Naive thymus-derived CD4-positive, alpha-beta T cell (primary cell): ENCODE measurements at regions of chr16 and their contacts with region 1.

Region 1: DNA sequence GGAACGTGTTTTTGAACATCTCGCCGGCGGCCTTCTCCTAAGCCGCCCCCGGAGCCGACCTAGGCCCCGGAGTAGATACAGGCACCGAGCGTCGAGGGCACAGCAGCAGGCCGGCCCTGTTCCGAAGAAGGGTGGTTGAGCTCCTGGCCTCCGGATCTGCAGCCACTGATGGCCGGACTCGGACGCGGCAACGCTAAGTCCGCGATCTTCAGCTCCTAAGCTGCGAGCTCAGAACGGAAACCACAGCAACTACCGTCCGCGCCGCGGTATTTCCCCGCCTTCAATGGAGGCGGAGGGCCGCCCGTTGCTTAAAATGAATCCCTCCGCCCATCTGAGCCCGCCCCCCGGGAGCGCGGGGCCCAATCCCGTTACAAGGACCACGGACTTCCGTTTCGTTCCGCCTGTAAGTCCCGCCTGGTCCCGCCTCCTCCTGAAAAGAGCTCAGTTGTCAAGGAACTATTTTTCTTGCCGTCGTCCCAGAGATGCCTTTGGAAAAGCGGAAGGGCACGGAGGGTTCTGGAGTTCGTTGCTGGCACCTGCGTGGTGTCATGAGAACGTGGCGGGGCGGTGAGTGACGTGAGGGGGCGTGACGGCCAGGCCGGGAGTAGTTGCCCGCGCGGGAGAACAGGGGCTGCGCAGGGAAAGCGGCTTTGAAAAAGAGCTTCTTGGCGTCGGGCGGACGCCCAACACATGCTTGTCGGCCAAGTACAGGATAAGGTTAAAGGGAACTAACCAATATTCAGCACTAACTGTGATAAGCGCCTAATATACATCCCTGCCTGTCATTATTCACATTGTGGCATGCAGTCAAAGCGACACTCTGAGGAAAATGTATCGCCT is at the start of gene CFAP20:
- DNase-seq: peak; percentile 87 to 99 (median 97)
- ATAC-seq: peak; percentile 94
- H3K4me3 ChIP-seq: peak within 1 kb of the TSS; percentile 99
- H3K4me3 Mint-ChIP-seq: peak within 1 kb of the TSS; percentile 89 to 96 (median 92)
- H3K27ac ChIP-seq: peak within 1 kb of the TSS; percentile 90
- H3K27ac Mint-ChIP-seq: peak within 1 kb of the TSS; percentile 80 to 98 (median 94)
- H3K4me1 ChIP-seq: peaks cover 17 to 29% of the 10 kb centered on the region in 2 donors
- H3K4me1 Mint-ChIP-seq: peaks cover 30 to 47% (median 45%) of the 10 kb centered on the region in 7 donors
- H3K27me3 ChIP-seq: no peaks in the 10 kb centered on the region
- H3K27me3 Mint-ChIP-seq: no peaks in the 10 kb centered on the region
- total RNA-seq, gene CFAP20: 28.2 to 165 (median 40.7) TPM

Region 2: DNA sequence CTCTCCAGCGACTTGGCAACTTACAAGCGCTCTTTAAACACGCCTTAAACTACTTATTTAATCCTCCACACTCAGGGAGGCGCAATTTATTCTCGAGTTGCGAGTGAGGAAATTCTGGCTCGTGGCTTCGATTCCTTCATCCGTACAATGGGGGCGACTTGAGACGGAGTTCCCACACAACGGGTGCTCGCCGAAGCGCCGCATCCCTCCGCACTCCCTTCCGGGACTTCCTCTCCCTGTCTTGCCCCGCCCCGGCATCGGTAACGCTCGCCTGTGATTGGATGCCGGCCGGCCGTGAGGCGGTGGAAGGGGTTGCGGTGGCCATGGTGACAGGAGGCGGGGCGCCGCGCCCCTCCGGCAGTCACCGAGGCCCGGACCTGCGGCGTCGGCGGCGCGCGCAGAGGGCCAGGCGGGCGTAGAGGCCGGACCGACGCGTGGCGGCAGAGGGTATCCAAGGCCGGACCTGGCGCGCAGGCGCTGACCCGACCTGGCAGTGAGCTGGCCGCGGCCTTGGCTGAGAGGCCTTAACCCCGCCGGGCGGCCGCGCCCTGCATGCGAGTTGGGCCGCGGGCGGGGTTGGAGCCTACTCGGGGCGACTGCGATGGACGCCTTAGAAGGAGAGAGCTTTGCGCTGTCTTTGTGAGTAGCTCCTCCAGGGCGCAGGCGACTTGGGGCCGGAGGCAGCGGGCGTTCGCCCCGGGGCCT is 884.4 kb before region 1 on chr16 and contains the start of gene ARL2BP:
- CTCF ChIA-PET with region 1: no interaction called
- POLR2A ChIA-PET with region 1: no interaction called
- intact Hi-C with region 1: loop called in 1 of 2 experiments (anchors 2 kb)
- DNase-seq: peak; percentile 90 to 98 (median 96)
- ATAC-seq: peak; percentile 97
- H3K4me3 ChIP-seq: peak within 1 kb of the TSS; percentile 44
- H3K4me3 Mint-ChIP-seq: peak within 1 kb of the TSS; percentile 81 to 97 (median 89)
- H3K27ac ChIP-seq: peak within 1 kb of the TSS; percentile 84
- H3K27ac Mint-ChIP-seq: peak within 1 kb of the TSS; percentile 88 to 97 (median 93)
- H3K4me1 ChIP-seq: peaks cover 5 to 6% of the 10 kb centered on the region in 2 donors
- H3K4me1 Mint-ChIP-seq: peaks cover 14 to 25% (median 17%) of the 10 kb centered on the region in 7 donors
- H3K27me3 ChIP-seq: no peaks in the 10 kb centered on the region
- H3K27me3 Mint-ChIP-seq: no peaks in the 10 kb centered on the region
- total RNA-seq, gene ARL2BP: 32.6 to 57.7 (median 37.9) TPM

Region 3: DNA sequence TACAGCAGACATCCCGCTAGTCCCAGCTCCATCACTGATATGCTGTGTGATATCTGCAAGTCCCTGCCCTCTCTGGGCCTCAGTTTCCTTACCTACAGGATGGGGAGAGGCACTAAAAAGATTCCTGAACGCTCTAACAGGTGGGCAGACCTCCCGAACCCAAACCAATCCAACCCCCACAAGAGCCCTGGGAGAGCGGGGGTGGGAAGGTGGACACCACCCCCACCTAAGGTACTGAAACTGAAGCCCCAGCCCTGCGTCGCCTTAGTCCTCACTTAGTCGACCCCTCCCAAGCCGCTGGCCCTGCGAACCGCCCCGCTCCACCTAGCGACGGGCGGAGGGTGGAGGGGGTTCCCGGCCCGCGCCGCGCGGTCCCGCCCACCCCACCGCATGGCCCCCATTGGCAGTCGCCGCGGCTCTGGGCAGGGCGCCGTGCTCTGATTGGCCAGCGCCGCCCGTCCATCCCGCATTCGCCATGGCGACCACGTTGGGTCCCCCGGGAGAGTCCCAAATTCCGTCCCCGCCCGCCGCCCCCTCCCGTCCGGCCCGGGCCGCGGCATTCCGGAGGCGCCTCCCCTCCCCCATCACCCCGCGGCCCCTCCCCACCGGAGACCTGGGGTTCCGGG is 593.5 kb before region 1 on chr16:
- CTCF ChIA-PET with region 1: no interaction called
- POLR2A ChIA-PET with region 1: no interaction called
- intact Hi-C with region 1: loop called in 1 of 2 experiments (anchors 1 kb)
- DNase-seq: peak; percentile 77 to 94 (median 87)
- ATAC-seq: peak; percentile 95
- H3K4me3 ChIP-seq: peak overlapping the region; percentile 44
- H3K4me3 Mint-ChIP-seq: peak overlapping the region; percentile 77 to 89 (median 82)
- H3K27ac ChIP-seq: peak overlapping the region; percentile 93
- H3K27ac Mint-ChIP-seq: peak overlapping the region; percentile 82 to 96 (median 94)
- H3K4me1 ChIP-seq: peaks cover 54 to 60% of the 10 kb centered on the region in 2 donors
- H3K4me1 Mint-ChIP-seq: peaks cover 57 to 79% (median 74%) of the 10 kb centered on the region in 7 donors
- H3K27me3 ChIP-seq: no peaks in the 10 kb centered on the region
- H3K27me3 Mint-ChIP-seq: no peaks in the 10 kb centered on the region

Region 4: GRCh38 chr16:57984331-57985203 is 144.8 kb before region 1 on chr16:
- CTCF ChIA-PET with region 1: no interaction called
- POLR2A ChIA-PET with region 1: no interaction called
- intact Hi-C with region 1: loop called in 1 of 2 experiments (anchors 1 kb)
- DNase-seq: peak; percentile 75 to 93 (median 90)
- ATAC-seq: peak; percentile 99
- H3K4me3 ChIP-seq: peak overlapping the region; percentile 63
- H3K4me3 Mint-ChIP-seq: peak overlapping the region; percentile 84 to 94 (median 91)
- H3K27ac ChIP-seq: peak overlapping the region; percentile 64
- H3K27ac Mint-ChIP-seq: peak overlapping the region; percentile 37 to 93 (median 72)
- H3K4me1 ChIP-seq: peaks cover 6% of the 10 kb centered on the region in 2 donors
- H3K4me1 Mint-ChIP-seq: peaks cover 2 to 21% (median 8%) of the 10 kb centered on the region in 7 donors
- H3K27me3 ChIP-seq: no peaks in the 10 kb centered on the region
- H3K27me3 Mint-ChIP-seq: peaks cover 0 to 21% (median 0%) of the 10 kb centered on the region in 5 donors

Region 5: DNA sequence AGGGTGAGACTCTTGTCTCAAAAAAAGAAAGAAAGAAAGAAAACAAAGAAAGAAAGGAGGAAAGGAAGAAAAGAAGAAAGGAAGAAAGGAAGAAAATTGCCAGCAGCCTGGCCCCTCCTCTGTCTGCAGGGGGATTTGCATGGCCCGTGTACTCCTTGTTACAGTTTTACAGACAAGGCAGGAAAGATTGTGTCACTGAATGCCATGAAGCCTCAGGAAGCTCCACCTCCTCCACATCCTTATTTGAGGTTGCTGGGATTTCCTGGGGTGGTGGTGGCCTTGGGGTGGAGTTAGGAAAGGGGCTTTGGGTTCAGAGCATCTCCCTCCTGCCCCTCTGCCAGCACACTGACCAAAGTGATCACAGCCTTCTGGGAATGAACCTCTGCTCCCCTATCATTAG is 23.7 kb before region 1 on chr16:
- CTCF ChIA-PET with region 1: no interaction called
- POLR2A ChIA-PET with region 1: no interaction called
- intact Hi-C with region 1: no loop called
- DNase-seq: no peak
- ATAC-seq: no peak
- H3K4me3 ChIP-seq: no peak overlapping the region
- H3K4me3 Mint-ChIP-seq: no peak overlapping the region
- H3K27ac ChIP-seq: no peak overlapping the region
- H3K27ac Mint-ChIP-seq: no peak overlapping the region
- H3K4me1 ChIP-seq: no peaks in the 10 kb centered on the region
- H3K4me1 Mint-ChIP-seq: peaks cover 0 to 10% (median 2%) of the 10 kb centered on the region in 7 donors
- H3K27me3 ChIP-seq: no peaks in the 10 kb centered on the region
- H3K27me3 Mint-ChIP-seq: peaks cover 0 to 2% (median 0%) of the 10 kb centered on the region in 5 donors

Region 6: DNA sequence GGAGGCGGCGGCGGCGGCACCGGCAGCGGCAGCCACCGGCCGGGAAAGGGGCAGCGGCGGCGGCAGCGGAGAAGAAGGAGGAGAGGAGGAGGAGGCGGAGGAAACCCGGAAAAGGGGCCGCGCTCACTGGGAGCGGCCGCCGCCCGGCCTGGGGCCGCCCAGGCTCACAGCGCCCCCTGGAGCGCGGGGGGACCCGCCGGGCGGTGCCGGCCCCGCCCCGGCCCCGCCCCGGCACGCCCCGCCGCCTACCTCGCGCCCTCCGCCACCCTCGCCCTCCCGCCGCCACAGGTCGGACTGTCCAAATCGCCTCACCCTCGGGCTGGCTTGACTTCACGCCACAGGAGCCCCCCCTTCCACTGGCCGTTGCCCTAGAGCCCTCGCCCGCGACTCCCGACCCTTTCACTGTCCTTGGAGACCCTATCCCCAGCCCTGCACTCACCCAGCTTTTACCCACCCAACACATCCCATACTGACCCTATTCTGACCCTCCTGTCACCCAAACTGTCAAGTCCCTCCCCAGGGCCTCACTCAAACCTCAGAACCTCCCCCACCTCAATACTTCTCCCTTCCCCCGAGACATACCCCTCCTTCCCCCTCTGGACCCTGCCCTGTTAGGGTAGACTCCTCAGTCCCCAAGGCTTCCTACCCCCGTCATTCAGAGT is 68.8 kb after region 1 on chr16 and contains the start of gene CSNK2A2:
- CTCF ChIA-PET with region 1: interaction called, 4 read pairs
- POLR2A ChIA-PET with region 1: interaction called, 5 read pairs
- intact Hi-C with region 1: loop called (anchors 1 kb)
- DNase-seq: peak; percentile 38 to 81 (median 60)
- ATAC-seq: peak; percentile 99
- H3K4me3 ChIP-seq: peak within 1 kb of the TSS; percentile 63
- H3K4me3 Mint-ChIP-seq: peak within 1 kb of the TSS; percentile 84 to 93 (median 88)
- H3K27ac ChIP-seq: peak within 1 kb of the TSS; percentile 62
- H3K27ac Mint-ChIP-seq: peak within 1 kb of the TSS; percentile 61 to 90 (median 82)
- H3K4me1 ChIP-seq: peaks cover 21 to 22% of the 10 kb centered on the region in 2 donors
- H3K4me1 Mint-ChIP-seq: peaks cover 30 to 51% (median 46%) of the 10 kb centered on the region in 7 donors
- H3K27me3 ChIP-seq: no peaks in the 10 kb centered on the region
- H3K27me3 Mint-ChIP-seq: peaks cover 9 to 33% (median 13%) of the 10 kb centered on the region in 5 donors
- total RNA-seq, gene CSNK2A2: 46.5 to 70.0 (median 67.9) TPM

Region 7: DNA sequence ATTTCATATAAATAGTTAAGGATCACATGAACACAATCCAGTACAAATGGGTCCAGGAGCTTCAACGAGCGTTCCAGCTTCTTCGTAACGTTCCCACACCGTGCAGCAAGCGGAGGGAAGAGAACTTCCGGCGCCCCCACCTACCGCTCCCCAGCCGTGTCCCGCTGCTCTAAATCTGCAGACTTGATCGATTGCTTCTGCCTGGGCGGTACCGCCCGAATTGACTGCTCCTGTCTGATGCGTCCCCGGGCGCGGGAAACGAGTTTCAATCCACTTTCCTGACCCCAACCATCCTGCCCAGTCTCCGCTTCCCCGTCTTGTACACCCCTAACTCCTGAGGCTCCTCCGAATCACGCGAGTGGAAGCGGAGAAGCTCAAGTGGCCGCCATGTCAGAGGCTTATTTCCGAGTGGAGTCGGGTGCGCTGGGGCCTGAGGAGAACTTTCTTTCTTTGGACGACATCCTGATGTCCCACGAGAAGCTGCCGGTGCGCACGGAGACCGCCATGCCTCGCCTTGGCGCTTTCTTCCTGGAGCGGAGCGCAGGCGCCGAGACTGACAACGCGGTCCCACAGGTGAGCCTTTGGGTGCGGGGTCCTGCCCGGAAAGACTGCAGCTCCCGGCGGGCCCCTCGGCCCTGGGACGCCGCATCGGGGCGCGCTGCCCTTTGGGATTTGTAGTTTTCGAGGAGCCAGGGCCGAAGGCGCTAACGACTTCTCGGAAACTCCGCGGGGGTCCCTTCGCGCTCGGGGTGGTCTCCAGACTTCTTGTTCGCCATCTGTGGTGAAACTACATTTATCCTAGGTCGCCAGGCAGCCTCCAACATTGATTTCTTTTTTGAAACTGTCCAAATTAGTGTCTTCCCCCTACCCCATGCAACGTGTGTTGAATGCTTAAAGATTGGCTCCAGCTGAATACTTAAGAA is 263.2 kb after region 1 on chr16 and contains the start of gene GINS3:
- CTCF ChIA-PET with region 1: no interaction called
- POLR2A ChIA-PET with region 1: no interaction called
- intact Hi-C with region 1: loop called (anchors 1 kb)
- DNase-seq: peak; percentile 67 to 83 (median 81)
- ATAC-seq: peak; percentile 96
- H3K4me3 ChIP-seq: peak within 1 kb of the TSS; percentile 99
- H3K4me3 Mint-ChIP-seq: peak within 1 kb of the TSS; percentile 91 to 100 (median 98)
- H3K27ac ChIP-seq: peak within 1 kb of the TSS; percentile 80
- H3K27ac Mint-ChIP-seq: peak within 1 kb of the TSS; percentile 89 to 99 (median 95)
- H3K4me1 ChIP-seq: peaks cover 5 to 6% of the 10 kb centered on the region in 2 donors
- H3K4me1 Mint-ChIP-seq: peaks cover 3 to 28% (median 16%) of the 10 kb centered on the region in 7 donors
- H3K27me3 ChIP-seq: no peaks in the 10 kb centered on the region
- H3K27me3 Mint-ChIP-seq: peaks cover 0 to 21% (median 0%) of the 10 kb centered on the region in 5 donors
- total RNA-seq, gene GINS3: 0.66 to 13.3 (median 1.4) TPM

Region 8: GRCh38 chr16:58629572-58630104 is 500.3 kb after region 1 on chr16 and contains the start of gene CNOT1:
- CTCF ChIA-PET with region 1: no interaction called
- POLR2A ChIA-PET with region 1: no interaction called
- intact Hi-C with region 1: loop called (anchors 1 to 2 kb)
- DNase-seq: peak; percentile 92 to 100 (median 99)
- ATAC-seq: peak; percentile 91
- H3K4me3 ChIP-seq: peak within 1 kb of the TSS; percentile 84
- H3K4me3 Mint-ChIP-seq: peak within 1 kb of the TSS; percentile 94 to 100 (median 98)
- H3K27ac ChIP-seq: peak within 1 kb of the TSS; percentile 96
- H3K27ac Mint-ChIP-seq: peak within 1 kb of the TSS; percentile 99 to 100 (median 100)
- H3K4me1 ChIP-seq: peaks cover 14 to 24% of the 10 kb centered on the region in 2 donors
- H3K4me1 Mint-ChIP-seq: peaks cover 16 to 47% (median 31%) of the 10 kb centered on the region in 7 donors
- H3K27me3 ChIP-seq: no peaks in the 10 kb centered on the region
- H3K27me3 Mint-ChIP-seq: peaks cover 0 to 2% (median 0%) of the 10 kb centered on the region in 5 donors
- total RNA-seq, gene CNOT1: 216 to 249 (median 236) TPM